CD4-positive, alpha-beta memory T cell (primary cell): ENCODE measurements at regions of chr17 and their contacts with region 1.

Region 1: GRCh38 chr17:18183334-18184142 is at the start of gene ALKBH5:
- DNase-seq: peak; percentile 98 to 99 (median 99)
- H3K4me3 ChIP-seq: peak within 1 kb of the TSS; percentile 85 to 95
- H3K4me3 Mint-ChIP-seq: peak within 1 kb of the TSS; percentile 94 to 99 (median 97)
- H3K27ac ChIP-seq: peak within 1 kb of the TSS; percentile 89
- H3K27ac Mint-ChIP-seq: peak within 1 kb of the TSS; percentile 97 to 99 (median 99)
- H3K4me1 ChIP-seq: peaks cover 48% of the 10 kb centered on the region
- H3K4me1 Mint-ChIP-seq: peaks cover 34 to 65% (median 46%) of the 10 kb centered on the region in 4 donors
- H3K27me3 ChIP-seq: no peaks in the 10 kb centered on the region
- H3K27me3 Mint-ChIP-seq: no peaks in the 10 kb centered on the region
- total RNA-seq, gene ALKBH5: 119 TPM

Region 2: GRCh38 chr17:17972126-17972951 is 211.2 kb before region 1 on chr17 and contains the starts of genes DRC3 and TOM1L2:
- CTCF ChIA-PET with region 1: no interaction called
- POLR2A ChIA-PET with region 1: interaction called, 6 read pairs
- intact Hi-C with region 1: loop called (anchors 1 kb)
- DNase-seq: peak; percentile 100
- H3K4me3 ChIP-seq: peak within 1 kb of the TSS; percentile 44 to 68
- H3K4me3 Mint-ChIP-seq: peak within 1 kb of the TSS; percentile 92 to 98 (median 96)
- H3K27ac ChIP-seq: peak within 1 kb of the TSS; percentile 82
- H3K27ac Mint-ChIP-seq: peak within 1 kb of the TSS; percentile 87 to 98 (median 97)
- H3K4me1 ChIP-seq: peaks cover 25% of the 10 kb centered on the region
- H3K4me1 Mint-ChIP-seq: peaks cover 23 to 51% (median 36%) of the 10 kb centered on the region in 4 donors
- H3K27me3 ChIP-seq: no peaks in the 10 kb centered on the region
- H3K27me3 Mint-ChIP-seq: no peaks in the 10 kb centered on the region
- total RNA-seq, gene DRC3: 0.64 to 0.67 TPM
- total RNA-seq, gene TOM1L2: 59.4 to 63.1 TPM

Region 3: DNA sequence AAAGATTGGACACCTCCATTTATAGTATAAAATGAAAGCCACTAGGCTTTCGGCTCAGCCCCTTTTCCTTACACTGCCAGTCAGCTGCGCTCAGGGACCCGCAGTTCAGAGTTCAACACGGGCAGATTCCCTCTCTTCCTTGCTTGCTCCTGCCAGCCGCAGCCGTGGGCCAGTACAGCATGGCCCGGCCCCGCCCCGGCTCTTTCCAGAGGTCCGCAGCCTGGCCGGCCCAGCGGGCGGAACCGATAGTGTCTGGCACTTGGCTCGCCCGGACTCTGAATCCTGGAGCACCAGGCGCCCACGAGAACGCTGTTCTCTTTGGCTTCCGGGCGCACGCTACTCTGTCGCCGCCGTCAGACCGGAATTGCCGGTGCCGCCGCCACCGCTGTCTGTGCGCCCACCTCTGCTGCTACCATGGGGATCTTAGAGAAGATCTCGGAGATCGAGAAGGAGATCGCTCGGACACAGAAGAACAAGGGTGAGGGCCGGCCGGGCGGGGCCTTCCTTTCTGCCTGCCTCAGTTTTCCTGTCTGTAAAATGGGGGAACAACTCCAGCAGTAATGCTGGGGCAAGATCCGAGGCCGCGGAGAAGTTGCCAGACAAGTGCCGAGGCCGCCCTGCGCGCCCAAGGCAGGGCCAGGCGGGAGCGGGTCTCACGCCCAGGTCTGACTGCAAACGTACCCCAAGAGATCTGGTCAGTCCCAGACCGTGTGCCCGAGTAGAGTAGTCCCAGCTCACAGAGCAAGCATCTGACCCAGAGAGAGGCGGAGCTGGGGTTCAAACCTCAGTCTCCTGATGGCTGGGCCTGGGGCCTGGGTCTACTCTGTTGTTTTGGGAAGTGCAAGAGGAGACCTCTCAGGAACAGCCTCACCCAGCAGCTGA is 95.7 kb before region 1 on chr17 and contains the start of gene DRG2:
- CTCF ChIA-PET with region 1: no interaction called
- POLR2A ChIA-PET with region 1: interaction called, 3 read pairs
- intact Hi-C with region 1: loop called (anchors 2 kb)
- DNase-seq: peak; percentile 84 to 90 (median 86)
- H3K4me3 ChIP-seq: peak within 1 kb of the TSS; percentile 71 to 99
- H3K4me3 Mint-ChIP-seq: peak within 1 kb of the TSS; percentile 98 to 100 (median 99)
- H3K27ac ChIP-seq: peak within 1 kb of the TSS; percentile 87
- H3K27ac Mint-ChIP-seq: peak within 1 kb of the TSS; percentile 98 to 99 (median 98)
- H3K4me1 ChIP-seq: peaks cover 23% of the 10 kb centered on the region
- H3K4me1 Mint-ChIP-seq: peaks cover 20 to 43% (median 25%) of the 10 kb centered on the region in 4 donors
- H3K27me3 ChIP-seq: no peaks in the 10 kb centered on the region
- H3K27me3 Mint-ChIP-seq: no peaks in the 10 kb centered on the region
- total RNA-seq, gene DRG2: 56.8 to 61.0 TPM

Region 4: DNA sequence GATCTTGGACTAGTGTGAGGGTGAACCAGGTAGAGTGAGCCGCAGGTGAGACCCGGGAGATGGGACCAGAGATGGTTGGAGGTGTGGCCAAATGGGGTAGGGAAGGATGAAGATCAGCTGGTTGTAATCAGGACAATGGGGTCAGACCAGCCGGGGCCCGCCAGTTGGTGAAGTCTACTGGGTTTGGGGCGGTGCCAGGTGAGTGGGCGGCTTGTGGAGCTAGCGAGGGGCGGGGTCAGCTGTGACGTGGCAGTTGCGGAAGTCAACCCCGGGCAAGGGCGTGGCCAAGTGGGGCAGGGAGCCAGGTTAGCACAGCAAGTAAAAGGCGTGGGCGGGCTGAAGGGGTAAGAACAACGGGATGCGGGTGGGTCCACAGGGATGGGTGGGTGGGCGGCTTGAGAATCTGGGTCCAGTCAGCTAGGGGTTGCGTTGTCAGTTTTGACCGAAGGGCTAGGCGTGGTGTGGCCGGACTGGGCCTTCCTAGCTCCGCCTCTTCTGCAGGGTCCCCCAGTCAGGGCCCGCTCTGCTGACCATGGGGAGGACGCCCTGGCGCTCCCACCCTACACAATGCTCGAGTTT is 25.4 kb before region 1 on chr17:
- CTCF ChIA-PET with region 1: interaction called, 3 read pairs
- POLR2A ChIA-PET with region 1: interaction called, 28 read pairs
- intact Hi-C with region 1: loop called (anchors 1 kb)
- DNase-seq: peak; percentile 90 to 95 (median 93)
- H3K4me3 ChIP-seq: peak overlapping the region; percentile 45 to 54
- H3K4me3 Mint-ChIP-seq: peak overlapping the region; percentile 77 to 91 (median 88)
- H3K27ac ChIP-seq: peak overlapping the region; percentile 46
- H3K27ac Mint-ChIP-seq: peak overlapping the region; percentile 69 to 96 (median 93)
- H3K4me1 ChIP-seq: peaks cover 14% of the 10 kb centered on the region
- H3K4me1 Mint-ChIP-seq: peaks cover 8 to 35% (median 12%) of the 10 kb centered on the region in 4 donors
- H3K27me3 ChIP-seq: no peaks in the 10 kb centered on the region
- H3K27me3 Mint-ChIP-seq: no peaks in the 10 kb centered on the region

Region 5: GRCh38 chr17:18225121-18225566 is 41.6 kb after region 1 on chr17:
- CTCF ChIA-PET with region 1: interaction called, 3 read pairs
- POLR2A ChIA-PET with region 1: interaction called, 9 read pairs
- intact Hi-C with region 1: loop called (anchors 1 kb)
- DNase-seq: peak; percentile 94 to 96 (median 96)
- H3K4me3 ChIP-seq: no peak overlapping the region
- H3K4me3 Mint-ChIP-seq: peak overlapping the region in 7 of 8 donors; percentile 41 to 71 (median 65)
- H3K27ac ChIP-seq: peak overlapping the region; percentile 15
- H3K27ac Mint-ChIP-seq: peak overlapping the region in 3 of 7 donors; percentile 59 to 92 (median 82)
- H3K4me1 ChIP-seq: peaks cover 28% of the 10 kb centered on the region
- H3K4me1 Mint-ChIP-seq: peaks cover 15 to 39% (median 21%) of the 10 kb centered on the region in 4 donors
- H3K27me3 ChIP-seq: no peaks in the 10 kb centered on the region
- H3K27me3 Mint-ChIP-seq: no peaks in the 10 kb centered on the region

Region 6: DNA sequence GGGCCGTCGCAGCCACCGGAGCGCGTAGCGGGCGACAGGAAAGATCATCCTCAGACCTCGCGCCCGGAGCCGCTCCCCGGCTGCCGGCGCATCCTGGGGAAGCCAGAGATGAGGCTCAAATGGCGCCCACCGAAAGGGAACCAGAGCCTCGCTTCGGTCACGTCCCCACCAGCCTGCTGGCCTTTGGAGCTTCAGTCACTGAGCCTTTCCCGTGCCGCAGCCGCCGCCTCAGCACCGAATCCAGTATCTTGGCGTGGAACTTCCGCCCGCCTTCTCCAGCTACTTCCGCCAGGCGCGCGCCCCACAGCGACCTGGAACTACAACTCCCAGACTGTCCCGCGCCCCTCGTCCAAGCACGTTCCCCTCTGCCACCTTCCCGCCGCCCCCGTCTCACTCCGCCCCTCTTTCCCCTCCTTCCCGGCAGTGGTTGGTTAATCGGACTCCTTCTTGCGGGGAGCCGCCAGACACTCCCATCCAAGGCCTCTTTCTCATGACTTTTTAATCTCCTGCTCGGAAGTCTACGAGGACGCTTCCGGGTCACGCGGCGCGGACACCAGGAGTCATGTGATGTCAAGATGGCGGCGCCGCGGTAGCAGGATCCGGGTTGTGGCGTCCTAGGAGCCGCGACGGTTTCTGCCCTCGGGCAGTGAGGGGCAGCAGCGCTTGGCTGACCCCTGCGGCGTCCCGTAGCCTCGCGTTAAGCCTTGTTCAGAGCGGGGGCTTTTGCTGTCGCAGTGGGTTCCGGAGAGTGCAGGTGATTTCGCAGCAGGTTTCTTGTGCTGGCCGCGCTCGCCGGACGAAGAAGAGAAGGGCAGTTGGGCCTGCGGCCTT is 131.4 kb after region 1 on chr17 and contains the starts of genes SMCR8 and TOP3A:
- CTCF ChIA-PET with region 1: no interaction called
- POLR2A ChIA-PET with region 1: interaction called, 10 read pairs
- intact Hi-C with region 1: loop called (anchors 1 kb)
- DNase-seq: peak; percentile 96 to 100 (median 98)
- H3K4me3 ChIP-seq: peak within 1 kb of the TSS; percentile 96 to 97
- H3K4me3 Mint-ChIP-seq: peak within 1 kb of the TSS; percentile 92 to 98 (median 96)
- H3K27ac ChIP-seq: peak within 1 kb of the TSS; percentile 93
- H3K27ac Mint-ChIP-seq: peak within 1 kb of the TSS; percentile 92 to 99 (median 98)
- H3K4me1 ChIP-seq: peaks cover 75% of the 10 kb centered on the region
- H3K4me1 Mint-ChIP-seq: peaks cover 53 to 92% (median 74%) of the 10 kb centered on the region in 4 donors
- H3K27me3 ChIP-seq: no peaks in the 10 kb centered on the region
- H3K27me3 Mint-ChIP-seq: no peaks in the 10 kb centered on the region
- total RNA-seq, gene SMCR8: 49.7 to 51.3 TPM
- total RNA-seq, gene TOP3A: 43.8 to 55.2 TPM